ENCODE measurements at regions of chr2 and their contacts with region 1.

Region 1: DNA sequence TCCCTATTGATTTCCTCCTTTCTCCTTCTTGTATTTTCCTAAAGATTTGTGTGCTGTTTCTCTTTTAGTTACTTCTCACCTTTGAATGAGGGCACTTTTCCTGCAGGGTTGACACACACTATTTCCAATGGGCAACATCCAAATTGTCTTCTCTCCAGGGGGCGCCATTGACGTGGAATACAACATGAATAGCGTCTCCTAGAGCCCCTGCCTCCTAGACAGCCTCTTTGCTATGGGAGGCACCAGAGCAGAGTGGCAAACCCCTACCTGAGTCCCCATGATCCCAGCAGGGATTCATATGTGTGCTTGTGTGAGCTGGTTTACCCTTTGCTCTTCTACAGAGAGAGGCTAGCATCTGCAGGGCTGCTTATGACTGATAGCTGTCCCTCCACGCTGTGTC is 61.3 kb upstream of the ITSN2 start:
- DNase-seq: peak; percentile 14 to 81 (median 37)
- ATAC-seq: peak; percentile 95
- H3K4me3 ChIP-seq: no peak overlapping the region
- H3K27ac ChIP-seq: no peak overlapping the region; the same call in 2 of the 3 replicates
- H3K4me1 ChIP-seq: peaks cover 3 to 4% of the 10 kb centered on the region in 2 experiments; a peak in 3 of 5 replicates
- H3K27me3 ChIP-seq: no peaks in the 10 kb centered on the region
- CTCF ChIP-seq: peak; percentile 74 to 82 (median 74)
- EP300 ChIP-seq: no peak
- POLR2A ChIP-seq: no peak
- RAD21 ChIP-seq: peak; percentile 89 to 94

Region 2: GRCh38 chr2:23934259-23934658 is 487.4 kb before region 1 on chr2:
- CTCF ChIA-PET with region 1: no interaction called
- POLR2A ChIA-PET with region 1: no interaction called
- in situ Hi-C with region 1: no loop called
- intact Hi-C with region 1: no loop called
- DNase-seq: no peak
- ATAC-seq: no peak
- H3K4me3 ChIP-seq: no peak overlapping the region
- H3K27ac ChIP-seq: no peak overlapping the region
- H3K4me1 ChIP-seq: peaks cover 1 to 3% of the 10 kb centered on the region in 2 experiments; a peak in 3 of 5 replicates
- H3K27me3 ChIP-seq: no peaks in the 10 kb centered on the region
- CTCF ChIP-seq: no peak
- EP300 ChIP-seq: no peak
- POLR2A ChIP-seq: no peak
- RAD21 ChIP-seq: no peak

Region 3: DNA sequence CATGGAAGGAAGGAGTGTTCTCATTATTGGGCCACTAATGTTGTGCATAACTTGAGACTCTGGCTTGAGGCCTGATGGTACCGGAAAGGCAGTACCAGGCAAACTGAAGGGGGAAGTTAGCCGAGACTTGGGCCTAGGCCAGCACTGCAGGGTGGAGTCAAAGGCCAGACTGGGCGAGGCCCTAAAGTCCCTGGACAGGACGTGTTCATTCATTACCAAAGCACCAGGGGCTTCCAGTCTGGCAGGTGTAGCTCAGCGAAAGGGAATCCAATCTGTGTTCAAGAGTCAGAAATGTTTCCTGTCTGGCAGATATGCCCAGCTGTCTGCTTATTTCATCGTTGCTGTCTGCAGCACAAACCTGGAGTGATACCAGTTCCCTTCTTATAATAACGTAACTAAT is 56.6 kb before region 1 on chr2:
- CTCF ChIA-PET with region 1: no interaction called
- POLR2A ChIA-PET with region 1: no interaction called
- in situ Hi-C with region 1: no loop called
- intact Hi-C with region 1: no loop called
- DNase-seq: peak in 3 of 4 experiments; percentile 26 to 67 (median 46)
- ATAC-seq: peak; percentile 62
- H3K4me3 ChIP-seq: no peak overlapping the region
- H3K27ac ChIP-seq: no peak overlapping the region
- H3K4me1 ChIP-seq: peaks cover 15 to 17% of the 10 kb centered on the region in 2 experiments
- H3K27me3 ChIP-seq: no peaks in the 10 kb centered on the region
- CTCF ChIP-seq: no peak
- EP300 ChIP-seq: no peak
- POLR2A ChIP-seq: no peak
- RAD21 ChIP-seq: no peak

Region 4: DNA sequence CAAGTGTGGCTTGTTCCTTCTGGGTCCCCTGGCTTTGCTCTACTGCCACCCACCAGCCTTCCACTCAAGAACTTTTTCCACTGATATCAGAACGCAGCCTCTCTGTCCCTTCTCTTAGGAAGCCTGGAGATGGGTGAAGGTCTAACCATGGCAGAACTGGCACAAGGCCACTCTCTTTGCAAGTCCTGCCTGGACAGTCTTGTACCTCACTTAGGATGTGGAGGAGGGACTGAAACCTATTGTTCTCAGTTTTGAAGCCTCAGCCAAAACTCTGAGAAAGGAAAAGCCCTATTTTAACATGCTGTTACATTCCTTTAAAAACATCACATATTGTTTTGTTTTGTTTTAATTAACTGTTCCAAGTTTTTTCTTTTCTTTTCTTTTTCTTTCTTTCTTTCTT is 10.5 kb after region 1 on chr2:
- CTCF ChIA-PET with region 1: no interaction called
- POLR2A ChIA-PET with region 1: interaction called, 13 read pairs
- in situ Hi-C with region 1: no loop called
- intact Hi-C with region 1: no loop called
- DNase-seq: no peak
- ATAC-seq: no peak
- H3K4me3 ChIP-seq: no peak overlapping the region
- H3K27ac ChIP-seq: no peak overlapping the region
- H3K4me1 ChIP-seq: peaks cover 0 to 8% of the 10 kb centered on the region in 2 experiments; a peak in 2 of 5 replicates
- H3K27me3 ChIP-seq: no peaks in the 10 kb centered on the region
- CTCF ChIP-seq: no peak
- EP300 ChIP-seq: no peak
- POLR2A ChIP-seq: no peak
- RAD21 ChIP-seq: no peak

Region 5: DNA sequence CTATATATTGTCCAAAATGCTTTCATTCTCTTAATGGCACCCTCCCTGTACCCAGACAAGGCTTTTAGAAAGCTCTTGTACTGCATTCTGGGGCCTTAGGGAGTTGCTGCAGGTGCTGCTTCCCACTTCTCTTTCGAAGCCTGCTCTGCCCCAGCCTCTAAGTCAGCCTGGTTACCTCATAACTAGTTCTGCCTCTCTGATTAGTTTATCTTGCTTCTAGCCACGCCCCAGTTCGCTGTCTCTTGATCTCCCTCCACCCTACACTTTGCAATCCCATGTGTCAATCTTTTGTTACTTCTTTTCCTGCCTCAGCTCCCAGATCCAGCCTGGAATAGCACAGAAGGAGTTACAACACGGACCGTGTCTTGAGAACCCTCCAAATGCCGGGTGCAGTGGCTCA is 55.6 kb after region 1 on chr2:
- CTCF ChIA-PET with region 1: no interaction called
- POLR2A ChIA-PET with region 1: no interaction called
- in situ Hi-C with region 1: no loop called
- intact Hi-C with region 1: loop called (anchors 5 kb)
- DNase-seq: peak; percentile 27 to 49 (median 33)
- ATAC-seq: peak; percentile 83
- H3K4me3 ChIP-seq: no peak overlapping the region
- H3K27ac ChIP-seq: no peak overlapping the region
- H3K4me1 ChIP-seq: peaks cover 5 to 8% of the 10 kb centered on the region in 2 experiments; a peak in 2 of 5 replicates
- H3K27me3 ChIP-seq: no peaks in the 10 kb centered on the region
- CTCF ChIP-seq: no peak
- EP300 ChIP-seq: no peak
- POLR2A ChIP-seq: no peak
- RAD21 ChIP-seq: no peak

Region 6: DNA sequence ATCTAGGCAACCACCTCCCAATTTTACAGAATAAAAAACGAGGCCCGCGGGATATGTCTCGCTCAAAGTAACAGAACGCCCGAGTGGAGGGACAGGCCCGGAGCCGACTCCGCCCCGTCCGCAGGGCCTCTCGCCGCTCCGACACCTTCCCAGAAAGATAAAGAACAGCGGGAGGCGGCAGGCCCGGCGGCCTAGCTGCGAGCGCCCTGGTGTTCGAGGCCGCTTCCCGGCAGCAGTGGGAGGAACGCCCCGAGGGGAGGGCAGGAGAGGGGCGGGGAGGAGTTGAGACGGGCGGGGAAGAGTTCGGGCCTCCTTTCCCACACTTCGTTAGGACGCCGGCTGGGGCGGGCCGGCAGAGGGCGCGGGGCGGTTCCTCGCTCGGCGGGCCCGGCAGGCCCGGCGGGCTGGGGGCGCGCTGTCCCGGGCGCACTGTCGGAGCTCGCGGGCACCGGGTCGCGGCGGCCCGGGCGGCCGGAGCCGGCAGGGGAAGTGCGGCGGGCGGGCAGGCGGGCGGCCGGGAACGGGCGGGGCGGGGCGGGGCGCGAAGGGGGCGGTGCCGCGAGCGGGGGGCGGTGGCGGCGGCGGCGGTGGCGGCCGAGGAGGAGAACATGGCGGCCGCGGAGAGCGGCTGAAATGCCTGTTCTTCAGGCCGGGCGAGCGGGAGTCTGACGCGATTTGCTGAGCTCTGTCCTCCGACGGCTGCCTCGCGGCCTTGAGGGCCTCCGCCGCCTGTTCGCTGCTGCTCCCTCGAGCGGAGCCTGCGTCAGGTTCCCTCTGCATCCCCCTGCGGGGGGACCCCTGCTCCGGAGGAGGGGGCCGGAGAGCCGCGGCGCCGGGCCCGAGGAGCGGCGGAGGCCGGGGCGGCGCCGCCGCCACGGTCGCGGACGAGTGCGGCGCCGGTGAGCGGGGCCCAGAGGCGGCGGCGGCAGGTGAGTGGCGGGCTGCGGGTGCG is 69.3 kb after region 1 on chr2 and contains the start of gene NCOA1:
- CTCF ChIA-PET with region 1: no interaction called
- POLR2A ChIA-PET with region 1: no interaction called
- in situ Hi-C with region 1: no loop called
- intact Hi-C with region 1: loop called (anchors 5 kb)
- DNase-seq: peak; percentile 88 to 97 (median 92)
- ATAC-seq: peak; percentile 87
- H3K4me3 ChIP-seq: peak within 1 kb of the TSS; percentile 69
- H3K27ac ChIP-seq: peak within 1 kb of the TSS; percentile 77
- H3K4me1 ChIP-seq: peaks cover 24 to 44% of the 10 kb centered on the region in 2 experiments
- H3K27me3 ChIP-seq: no peaks in the 10 kb centered on the region
- CTCF ChIP-seq: peak in 2 of 3 experiments; percentile 8 to 30; a peak in 3 of 6 replicates
- EP300 ChIP-seq: 0 out of 2 replicates have a peak, but pooled peaks have one; percentile 34
- POLR2A ChIP-seq: peak; percentile 57; the same call in 1 of the 2 replicates
- RAD21 ChIP-seq: peak in 1 of 2 experiments; percentile 31
- polyA plus RNA-seq, gene NCOA1: 4.9 to 6.2 TPM

Region 7: GRCh38 chr2:24543252-24543651 is 121.6 kb after region 1 on chr2:
- CTCF ChIA-PET with region 1: no interaction called
- POLR2A ChIA-PET with region 1: no interaction called
- in situ Hi-C with region 1: no loop called
- intact Hi-C with region 1: loop called (anchors 2 kb)
- DNase-seq: peak in 1 of 4 experiments; percentile 41
- ATAC-seq: no peak; the same call in 2 of the 3 replicates
- H3K4me3 ChIP-seq: no peak overlapping the region
- H3K27ac ChIP-seq: no peak overlapping the region
- H3K4me1 ChIP-seq: no peaks in the 10 kb centered on the region
- H3K27me3 ChIP-seq: no peaks in the 10 kb centered on the region
- CTCF ChIP-seq: peak; percentile 15 to 40 (median 40); a peak in 3 of 6 replicates
- EP300 ChIP-seq: no peak
- POLR2A ChIP-seq: no peak
- RAD21 ChIP-seq: peak in 1 of 2 experiments; percentile 24; a peak in 2 of 4 replicates

Region 8: DNA sequence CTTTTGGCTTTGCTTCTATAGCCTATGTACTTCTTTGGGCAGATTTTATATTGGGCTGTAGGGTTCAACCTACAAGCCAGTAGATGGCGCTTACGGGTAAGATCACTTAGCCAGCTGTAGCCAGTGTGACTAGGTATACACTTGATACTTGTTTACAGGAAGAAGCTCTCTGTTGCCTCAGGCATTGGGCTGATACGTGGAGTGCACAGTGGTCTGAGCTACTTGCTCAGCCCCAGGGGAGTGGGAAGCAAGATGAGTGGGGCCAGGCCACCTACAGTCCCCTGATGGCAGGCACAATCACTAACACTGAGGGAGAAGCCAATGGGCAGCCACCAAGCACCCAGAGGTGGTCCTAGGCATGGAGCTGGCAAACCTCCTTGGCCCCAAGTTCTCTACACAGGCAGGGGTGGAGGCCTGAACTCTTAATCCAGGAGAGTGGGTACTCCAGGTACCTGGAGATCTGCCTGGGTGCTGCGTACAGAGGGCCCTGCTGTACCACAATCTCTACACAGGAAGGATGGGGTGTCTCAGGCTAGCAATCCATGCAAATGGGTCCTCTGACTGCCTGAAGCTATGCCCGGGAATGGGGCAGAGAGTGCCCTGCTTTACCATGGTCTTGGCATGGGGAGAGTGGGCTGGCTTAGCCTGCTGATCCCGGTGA is 191.6 kb after region 1 on chr2:
- CTCF ChIA-PET with region 1: interaction called, 3 read pairs
- POLR2A ChIA-PET with region 1: no interaction called
- in situ Hi-C with region 1: no loop called
- intact Hi-C with region 1: loop called (anchors 2 kb)
- DNase-seq: peak in 2 of 4 experiments; percentile 50 to 65
- ATAC-seq: peak; percentile 97
- H3K4me3 ChIP-seq: no peak overlapping the region
- H3K27ac ChIP-seq: no peak overlapping the region; the same call in 2 of the 3 replicates
- H3K4me1 ChIP-seq: peaks cover 0 to 2% of the 10 kb centered on the region in 2 experiments; a peak in 2 of 5 replicates
- H3K27me3 ChIP-seq: no peaks in the 10 kb centered on the region
- CTCF ChIP-seq: peak; percentile 53 to 72 (median 68)
- EP300 ChIP-seq: no peak
- POLR2A ChIP-seq: no peak
- RAD21 ChIP-seq: peak in 1 of 2 experiments; percentile 85; a peak in 2 of 4 replicates